Caco-2 (cell line): ENCODE measurements at regions of chr19 and their contacts with region 1.

Region 1: GRCh38 chr19:5680437-5681368 is at the starts of genes HSD11B1L and MICOS13:
- DNase-seq: peak; percentile 96 to 98
- H3K4me3 ChIP-seq: peak within 1 kb of the TSS; percentile 91
- H3K4me3 Mint-ChIP-seq: peak within 1 kb of the TSS; percentile 79
- H3K27ac Mint-ChIP-seq: peak within 1 kb of the TSS; percentile 96
- H3K4me1 ChIP-seq: no peaks in the 10 kb centered on the region; the same call in 1 of the 2 replicates
- H3K4me1 Mint-ChIP-seq: peaks cover 15% of the 10 kb centered on the region
- H3K27me3 ChIP-seq: no peaks in the 10 kb centered on the region
- H3K27me3 Mint-ChIP-seq: no peaks in the 10 kb centered on the region
- CTCF ChIP-seq: no peak
- total RNA-seq, gene HSD11B1L: 2.4 and 3.1 TPM in 2 replicates
- total RNA-seq, gene MICOS13: 43.1 and 44.0 TPM in 2 replicates

Region 2: DNA sequence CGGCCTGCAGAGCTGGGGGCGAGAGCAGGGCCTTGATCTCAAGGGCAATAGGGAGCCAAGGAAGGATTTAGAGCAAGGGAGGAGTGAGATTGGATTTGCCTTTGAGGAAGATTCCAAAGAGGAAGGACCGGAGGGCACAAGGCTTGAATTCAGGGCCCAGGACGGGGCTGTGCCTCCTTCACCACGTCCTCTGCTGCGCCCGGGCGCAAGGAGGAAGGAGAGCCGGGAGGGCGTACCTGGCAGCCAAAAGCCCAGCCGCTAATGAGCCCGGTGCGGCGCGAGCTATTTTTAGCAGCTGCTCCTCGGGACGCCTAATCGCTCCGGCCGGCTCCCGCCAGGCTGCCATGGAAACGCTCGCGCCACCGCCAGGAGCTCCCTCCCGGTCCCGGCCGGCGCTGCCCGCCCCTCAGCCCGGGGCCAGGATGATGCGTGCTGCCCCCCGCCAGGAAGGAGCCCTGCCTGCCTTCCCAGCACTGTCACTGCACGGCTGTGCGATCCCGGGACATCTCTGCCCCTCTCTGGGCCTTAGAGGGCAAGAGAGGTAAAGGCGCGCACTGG is 144.3 kb before region 1 on chr19:
- CTCF ChIA-PET with region 1: no interaction called
- POLR2A ChIA-PET with region 1: no interaction called
- intact Hi-C with region 1: no loop called
- DNase-seq: no peak
- H3K4me3 ChIP-seq: no peak overlapping the region
- H3K4me3 Mint-ChIP-seq: peak overlapping the region; percentile 11
- H3K27ac Mint-ChIP-seq: no peak overlapping the region
- H3K4me1 ChIP-seq: no peaks in the 10 kb centered on the region
- H3K4me1 Mint-ChIP-seq: no peaks in the 10 kb centered on the region
- H3K27me3 ChIP-seq: no peaks in the 10 kb centered on the region
- H3K27me3 Mint-ChIP-seq: no peaks in the 10 kb centered on the region
- CTCF ChIP-seq: no peak

Region 3: GRCh38 chr19:5547881-5548280 is 132.8 kb before region 1 on chr19:
- CTCF ChIA-PET with region 1: no interaction called
- POLR2A ChIA-PET with region 1: no interaction called
- intact Hi-C with region 1: no loop called
- DNase-seq: peak; percentile 53 to 54
- H3K4me3 ChIP-seq: no peak overlapping the region
- H3K4me3 Mint-ChIP-seq: no peak overlapping the region
- H3K27ac Mint-ChIP-seq: no peak overlapping the region
- H3K4me1 ChIP-seq: no peaks in the 10 kb centered on the region
- H3K4me1 Mint-ChIP-seq: no peaks in the 10 kb centered on the region
- H3K27me3 ChIP-seq: no peaks in the 10 kb centered on the region
- H3K27me3 Mint-ChIP-seq: no peaks in the 10 kb centered on the region
- CTCF ChIP-seq: peak; percentile 59 to 88

Region 4: DNA sequence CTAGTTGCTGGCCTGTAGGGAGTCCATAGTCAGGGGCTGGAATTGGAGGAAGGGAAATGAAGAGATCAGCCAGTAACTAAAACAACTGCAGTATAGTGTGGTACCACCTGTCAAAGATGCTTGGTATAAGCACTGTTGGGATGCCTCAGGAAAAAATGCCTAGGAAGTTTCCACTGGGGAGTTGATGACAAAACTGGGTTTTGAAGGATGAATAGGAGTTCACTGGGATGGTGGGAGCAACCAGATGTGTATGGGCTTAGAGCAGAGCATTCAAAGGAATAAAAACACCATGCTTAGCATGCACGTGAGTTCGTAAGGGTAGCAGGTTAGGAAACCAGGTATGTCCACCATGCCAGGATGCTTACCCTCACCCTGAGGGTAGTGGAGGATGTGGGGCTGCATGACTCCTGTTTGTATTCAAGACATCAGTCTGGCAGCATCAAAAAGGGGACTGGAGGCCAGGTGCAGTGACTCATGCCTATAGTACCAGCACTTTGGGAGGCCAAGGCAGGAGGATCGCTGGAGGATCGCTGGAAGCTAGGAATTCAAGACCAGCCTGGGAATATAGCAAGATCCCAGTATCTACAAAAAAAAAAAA is 46.8 kb after region 1 on chr19:
- CTCF ChIA-PET with region 1: no interaction called
- POLR2A ChIA-PET with region 1: no interaction called
- intact Hi-C with region 1: no loop called
- DNase-seq: no peak
- H3K4me3 ChIP-seq: no peak overlapping the region
- H3K4me3 Mint-ChIP-seq: no peak overlapping the region
- H3K27ac Mint-ChIP-seq: no peak overlapping the region
- H3K4me1 ChIP-seq: no peaks in the 10 kb centered on the region
- H3K4me1 Mint-ChIP-seq: no peaks in the 10 kb centered on the region
- H3K27me3 ChIP-seq: no peaks in the 10 kb centered on the region
- H3K27me3 Mint-ChIP-seq: no peaks in the 10 kb centered on the region
- CTCF ChIP-seq: no peak

Region 5: DNA sequence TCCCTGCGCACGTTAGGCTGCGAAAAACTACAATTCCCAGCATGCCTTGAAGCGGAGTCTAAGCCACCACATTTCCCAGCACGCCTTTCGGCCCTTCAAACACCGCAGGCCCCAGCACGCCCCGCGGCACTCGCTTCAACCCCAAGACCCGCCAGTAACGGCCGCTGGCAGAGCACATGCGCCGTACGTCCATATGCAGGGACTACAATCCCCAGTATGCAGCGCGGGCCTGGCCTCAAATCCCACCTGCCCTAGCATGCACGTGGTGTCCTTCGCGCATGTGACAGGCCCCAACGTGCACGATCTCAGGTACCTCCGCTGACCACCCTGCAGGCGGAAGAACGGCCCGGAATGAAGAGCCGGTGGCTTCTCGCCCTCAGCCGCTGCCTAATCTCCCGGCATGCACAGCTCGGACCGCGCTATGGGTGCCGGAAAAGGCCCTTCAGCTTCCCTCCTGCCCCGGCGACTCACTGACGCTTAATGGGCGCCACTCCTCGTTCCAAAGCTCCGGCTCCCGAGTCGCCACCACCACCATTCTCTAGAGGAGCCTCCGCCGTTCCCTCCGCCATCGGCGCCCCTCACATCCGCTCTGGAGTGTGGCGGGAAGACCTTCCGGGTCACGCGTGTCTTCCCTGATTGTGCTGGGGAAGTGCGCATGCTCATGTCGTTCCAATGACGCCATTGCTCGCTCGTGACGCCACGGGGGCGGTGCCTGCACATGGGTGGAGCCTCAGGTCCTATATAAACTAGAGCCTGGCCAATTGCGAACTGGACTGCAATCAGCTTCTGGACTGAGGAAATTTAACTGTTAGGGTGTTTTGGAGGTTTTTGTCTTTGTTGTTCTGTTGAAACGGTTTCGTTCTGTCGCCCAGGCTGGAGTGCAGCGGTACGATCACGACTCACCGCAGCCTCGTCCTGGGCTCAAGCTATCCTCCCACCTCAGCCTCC is 110.1 kb after region 1 on chr19 and contains the start of gene DUS3L:
- CTCF ChIA-PET with region 1: no interaction called
- POLR2A ChIA-PET with region 1: no interaction called
- intact Hi-C with region 1: loop called (anchors 1 kb)
- DNase-seq: peak; percentile 96 to 98
- H3K4me3 ChIP-seq: peak within 1 kb of the TSS; percentile 86
- H3K4me3 Mint-ChIP-seq: peak within 1 kb of the TSS; percentile 98
- H3K27ac Mint-ChIP-seq: peak within 1 kb of the TSS; percentile 100
- H3K4me1 ChIP-seq: no peaks in the 10 kb centered on the region
- H3K4me1 Mint-ChIP-seq: no peaks in the 10 kb centered on the region
- H3K27me3 ChIP-seq: no peaks in the 10 kb centered on the region
- H3K27me3 Mint-ChIP-seq: no peaks in the 10 kb centered on the region
- CTCF ChIP-seq: no peak
- total RNA-seq, gene DUS3L: 73.3 and 75.4 TPM in 2 replicates